ENCODE measurements at regions of chr19 and their contacts with region 1.

Region 1: GRCh38 chr19:55227241-55228014 is 1.1 kb downstream of the TMEM86B start:
- DNase-seq: no peak
- H3K4me3 ChIP-seq: no peak overlapping the region
- H3K27ac ChIP-seq: peak overlapping the region in 1 of 2 experiments; percentile 78; a peak in 2 of 4 replicates
- H3K4me1 ChIP-seq: peaks cover 0 to 38% of the 10 kb centered on the region in 2 experiments; a peak in 1 of 4 replicates
- H3K27me3 ChIP-seq: no peaks in the 10 kb centered on the region
- CTCF ChIP-seq: no peak
- EP300 ChIP-seq: no peak
- RAD21 ChIP-seq: no peak

Region 2: GRCh38 chr19:55178781-55179599 is 48.4 kb before region 1 on chr19:
- CTCF ChIA-PET with region 1: interaction called, 4 read pairs
- POLR2A ChIA-PET with region 1: interaction called, 10 read pairs
- DNase-seq: peak; percentile 97
- H3K4me3 ChIP-seq: peak overlapping the region; percentile 54 to 56
- H3K27ac ChIP-seq: peak overlapping the region in 1 of 2 experiments; percentile 77; a peak in 1 of 4 replicates
- H3K4me1 ChIP-seq: peaks cover 0 to 6% of the 10 kb centered on the region in 2 experiments; a peak in 1 of 4 replicates
- H3K27me3 ChIP-seq: peaks cover 29% of the 10 kb centered on the region
- CTCF ChIP-seq: no peak
- EP300 ChIP-seq: peak in 1 of 2 experiments; percentile 29; a peak in 1 of 4 replicates
- RAD21 ChIP-seq: peak; percentile 29

Region 3: DNA sequence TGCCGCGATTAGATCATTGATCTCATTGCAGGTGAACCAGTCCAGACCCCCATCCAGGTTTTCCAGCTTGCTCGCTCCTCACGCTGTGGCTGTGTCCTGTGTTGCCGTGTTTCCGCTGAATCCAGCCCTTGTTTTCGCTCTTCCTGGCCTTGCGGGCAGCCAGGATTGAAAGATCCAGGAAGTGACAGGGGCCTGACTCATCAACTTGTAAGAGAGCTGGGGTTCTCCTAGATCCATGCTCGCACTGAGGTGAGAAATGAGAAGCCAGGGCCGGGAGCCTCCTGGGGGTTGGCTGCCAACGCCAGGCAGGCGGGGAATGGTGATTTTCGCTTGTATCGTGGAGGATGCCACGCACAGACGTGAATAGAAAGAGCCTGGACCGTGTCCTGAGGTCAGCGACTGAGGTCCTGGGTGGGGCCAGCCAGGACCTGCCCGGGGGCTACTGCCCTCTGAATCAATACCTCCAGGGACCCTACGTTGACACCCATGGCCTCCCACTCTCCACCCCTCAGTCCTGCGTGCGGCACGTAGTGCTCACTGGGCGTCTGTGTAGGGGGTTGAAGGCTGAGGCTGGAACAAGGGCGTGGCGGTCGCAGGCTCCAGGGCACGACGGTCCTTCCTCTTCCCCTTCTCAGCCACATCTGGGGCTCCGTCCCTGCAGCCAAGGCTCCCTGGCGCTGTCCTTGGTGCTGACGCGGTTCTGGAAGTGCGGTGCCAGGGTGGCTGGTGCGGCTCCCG is 10.8 kb before region 1 on chr19:
- CTCF ChIA-PET with region 1: no interaction called
- POLR2A ChIA-PET with region 1: interaction called, 17 read pairs
- DNase-seq: peak; percentile 91
- H3K4me3 ChIP-seq: peak overlapping the region; percentile 59 to 66
- H3K27ac ChIP-seq: peak overlapping the region; percentile 83 to 88
- H3K4me1 ChIP-seq: peaks cover 0 to 5% of the 10 kb centered on the region in 2 experiments; a peak in 1 of 4 replicates
- H3K27me3 ChIP-seq: no peaks in the 10 kb centered on the region
- CTCF ChIP-seq: no peak
- EP300 ChIP-seq: peak; percentile 64 to 81; a peak in 3 of 4 replicates
- RAD21 ChIP-seq: peak; percentile 48

Region 4: DNA sequence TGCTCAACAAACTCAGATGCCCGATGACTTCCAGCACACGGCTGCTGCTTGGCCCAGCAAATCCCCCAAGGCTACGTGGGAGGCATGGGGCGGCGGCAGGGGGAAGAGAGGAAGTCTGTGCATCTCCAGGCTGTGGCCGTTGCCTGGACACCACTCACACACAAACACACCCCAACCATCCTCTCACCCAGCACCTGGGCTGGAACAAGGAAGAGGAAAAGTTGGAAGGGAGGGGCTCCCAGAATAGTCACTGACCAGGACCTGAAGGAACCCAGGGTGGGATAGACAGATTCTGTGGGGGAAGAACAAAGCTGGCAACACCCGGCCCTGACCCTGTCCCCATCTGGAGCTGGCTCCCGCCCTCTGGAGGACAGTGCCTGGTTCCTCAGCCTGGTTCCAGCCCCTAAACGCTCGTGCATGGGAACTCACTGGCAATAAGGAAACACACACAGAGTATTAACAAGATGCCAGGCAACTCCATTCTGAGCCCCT is 20.2 kb after region 1 on chr19:
- CTCF ChIA-PET with region 1: no interaction called
- POLR2A ChIA-PET with region 1: interaction called, 11 read pairs
- DNase-seq: peak; percentile 71
- H3K4me3 ChIP-seq: no peak overlapping the region
- H3K27ac ChIP-seq: peak overlapping the region in 1 of 2 experiments; percentile 36; a peak in 1 of 4 replicates
- H3K4me1 ChIP-seq: peaks cover 0 to 23% of the 10 kb centered on the region in 2 experiments; a peak in 1 of 4 replicates
- H3K27me3 ChIP-seq: no peaks in the 10 kb centered on the region
- CTCF ChIP-seq: no peak
- EP300 ChIP-seq: no peak
- RAD21 ChIP-seq: peak; percentile 29; the same call in 1 of the 2 replicates